Prostate gland (tissue), 2 donors: ENCODE measurements at regions of chr7 and their contacts with region 1.

Region 1: DNA sequence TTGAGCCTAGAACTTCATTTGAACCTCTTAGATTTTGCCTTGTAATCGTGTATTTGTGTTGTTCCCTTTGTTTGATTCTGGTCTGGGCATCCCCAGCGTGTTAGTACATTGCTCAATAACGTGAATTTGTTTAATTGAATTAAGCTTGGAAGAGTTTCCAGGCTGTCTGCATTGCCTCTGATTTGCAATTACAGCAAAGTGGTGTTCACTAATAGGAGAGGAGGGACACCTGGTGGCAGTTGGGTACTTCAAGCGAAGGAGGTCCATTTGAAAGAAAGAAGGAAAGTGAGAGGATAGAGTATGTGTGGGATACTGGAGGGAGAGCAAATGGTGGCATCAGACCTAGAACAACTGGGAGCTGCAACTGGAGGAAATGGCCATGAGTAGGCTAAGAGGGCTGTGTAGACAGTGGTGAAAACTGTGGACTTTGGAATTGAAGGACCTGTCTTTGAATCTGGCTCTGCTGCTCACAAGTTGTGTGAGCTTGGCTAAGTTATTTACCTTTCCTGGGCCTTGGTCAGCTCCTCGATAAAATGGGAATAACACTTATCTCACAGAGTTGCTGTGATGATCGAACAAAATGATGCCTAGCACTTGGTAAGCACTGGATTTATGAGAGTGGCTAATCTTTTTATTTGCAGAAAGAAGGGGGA is 15.1 kb downstream of the LSMEM1 start:
- DNase-seq: peak; percentile 69
- H3K4me3 ChIP-seq: no peak overlapping the region
- H3K27ac ChIP-seq: no peak overlapping the region
- H3K4me1 ChIP-seq: no peaks in the 10 kb centered on the region
- H3K27me3 ChIP-seq: no peaks in the 10 kb centered on the region
- CTCF ChIP-seq: peak; percentile 46 to 75 (median 57)
- POLR2A ChIP-seq: no peak

Region 2: GRCh38 chr7:111741811-111742240 is 754.1 kb before region 1 on chr7:
- intact Hi-C with region 1: loop called (anchors 5 kb)
- DNase-seq: peak; percentile 65
- H3K4me3 ChIP-seq: no peak overlapping the region
- H3K27ac ChIP-seq: no peak overlapping the region
- H3K4me1 ChIP-seq: peaks cover 4% of the 10 kb centered on the region
- H3K27me3 ChIP-seq: no peaks in the 10 kb centered on the region
- CTCF ChIP-seq: peak in 3 of 4 experiments; percentile 60 to 73 (median 65)
- POLR2A ChIP-seq: no peak

Region 3: GRCh38 chr7:111752022-111752582 is 743.8 kb before region 1 on chr7:
- intact Hi-C with region 1: loop called (anchors 5 kb)
- DNase-seq: no peak
- H3K4me3 ChIP-seq: no peak overlapping the region
- H3K27ac ChIP-seq: no peak overlapping the region
- H3K4me1 ChIP-seq: no peaks in the 10 kb centered on the region
- H3K27me3 ChIP-seq: no peaks in the 10 kb centered on the region
- CTCF ChIP-seq: peak in 3 of 4 experiments; percentile 45 to 57 (median 52)
- POLR2A ChIP-seq: no peak

Region 4: DNA sequence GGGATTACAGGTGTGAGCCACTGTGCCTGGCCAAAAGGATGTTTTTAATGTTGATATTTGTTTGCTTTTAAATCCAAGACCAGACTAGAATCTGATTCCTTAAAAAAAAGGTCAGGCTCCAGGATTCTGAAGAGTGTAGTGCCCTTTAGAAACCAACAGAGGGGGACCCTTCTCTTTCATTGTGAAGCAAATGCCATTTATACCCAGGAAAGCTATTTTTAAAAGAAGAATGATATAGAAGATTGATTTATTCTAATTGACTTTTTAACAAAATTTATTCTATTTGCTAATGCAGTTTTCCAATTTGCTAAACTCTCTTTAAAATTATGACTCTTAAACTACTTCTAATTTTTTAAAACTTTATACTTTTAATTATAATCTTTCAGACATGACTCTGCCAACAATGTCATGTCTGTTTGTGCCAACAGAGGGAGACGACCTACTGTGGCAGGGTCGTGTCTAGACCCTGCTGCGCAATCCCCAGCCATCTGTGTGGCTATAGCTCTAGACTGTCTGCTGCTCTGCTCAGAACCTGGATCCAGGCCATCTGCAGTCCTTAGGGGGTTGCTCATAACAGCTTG is 732.6 kb before region 1 on chr7:
- intact Hi-C with region 1: loop called (anchors 5 kb)
- DNase-seq: no peak
- H3K4me3 ChIP-seq: no peak overlapping the region
- H3K27ac ChIP-seq: no peak overlapping the region
- H3K4me1 ChIP-seq: no peaks in the 10 kb centered on the region
- H3K27me3 ChIP-seq: no peaks in the 10 kb centered on the region
- CTCF ChIP-seq: peak; percentile 23 to 68 (median 50)
- POLR2A ChIP-seq: no peak

Region 5: DNA sequence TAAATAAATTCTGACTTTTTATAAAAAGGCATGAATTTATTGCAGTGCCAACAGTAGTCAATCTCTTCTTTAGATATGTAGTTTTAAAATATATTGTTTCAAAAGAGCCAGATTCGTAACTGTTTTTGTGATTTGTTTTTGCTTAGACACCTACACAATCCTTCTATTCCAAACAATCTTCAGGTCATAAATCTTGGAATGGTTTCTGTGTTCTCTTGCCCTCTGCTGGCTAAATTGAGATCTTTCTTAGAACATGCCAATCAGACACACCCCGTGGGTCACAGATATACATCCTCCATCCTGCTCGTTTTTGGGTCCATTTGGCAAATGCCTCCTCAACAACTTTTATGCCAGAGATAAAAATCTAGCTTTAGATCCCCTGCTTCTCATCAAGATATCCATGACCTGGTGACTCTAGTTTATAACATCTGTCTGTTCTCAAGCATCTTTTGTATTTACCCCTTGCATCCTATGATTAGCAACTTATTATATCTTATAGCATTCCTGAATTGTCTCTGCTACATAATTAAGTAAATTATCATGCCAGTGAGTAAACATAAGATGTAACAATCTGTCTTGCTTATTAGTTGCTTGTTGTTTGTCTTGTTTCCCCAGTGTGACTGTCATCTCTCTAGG is 81.0 kb before region 1 on chr7:
- intact Hi-C with region 1: loop called (anchors 10 kb)
- DNase-seq: no peak
- H3K4me3 ChIP-seq: no peak overlapping the region
- H3K27ac ChIP-seq: no peak overlapping the region
- H3K4me1 ChIP-seq: no peaks in the 10 kb centered on the region
- H3K27me3 ChIP-seq: no peaks in the 10 kb centered on the region
- CTCF ChIP-seq: peak; percentile 29 to 65 (median 50)
- POLR2A ChIP-seq: no peak